CD8-positive, alpha-beta memory T cell (primary cell): ENCODE measurements at regions of chr5 and their contacts with region 1.

Region 1: DNA sequence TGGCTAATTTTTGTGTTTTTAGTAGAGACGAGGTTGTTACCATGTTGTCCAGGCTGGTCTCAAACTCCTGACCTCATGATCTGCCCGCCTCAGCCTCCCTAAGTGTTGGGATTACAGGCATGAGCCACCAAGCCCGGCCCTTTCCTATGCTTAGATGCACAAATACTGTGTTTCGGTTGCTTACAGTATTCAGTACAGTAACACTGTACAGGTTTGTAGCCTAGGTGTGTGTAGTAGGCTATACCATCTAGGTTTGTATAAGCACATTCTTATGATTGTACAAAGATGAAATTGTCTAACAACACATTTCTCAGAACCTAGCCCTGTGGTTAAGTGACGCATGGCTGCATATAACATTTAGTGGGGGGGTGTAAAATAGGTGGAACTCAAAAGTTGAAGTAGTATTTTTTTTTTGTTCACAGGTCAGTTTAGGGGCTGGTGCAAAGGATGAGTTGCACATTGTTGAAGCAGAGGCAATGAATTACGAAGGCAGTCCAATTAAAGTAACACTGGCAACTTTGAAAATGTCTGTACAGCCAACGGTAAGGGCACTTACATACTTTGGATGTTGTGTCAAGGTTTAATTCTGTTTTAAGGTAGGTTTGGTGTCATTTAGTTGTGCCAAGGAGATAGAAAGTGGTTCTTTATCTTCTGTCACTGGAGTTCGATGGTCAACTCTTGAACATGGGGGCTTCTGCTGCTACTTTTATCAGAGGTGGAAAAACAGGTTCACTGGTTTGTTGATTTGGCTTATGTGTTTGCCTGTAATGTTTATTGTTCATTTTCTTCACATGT is 3.4 kb downstream of the NPM1 start:
- DNase-seq: peak in 1 of 5 donors; percentile 15
- H3K4me3 ChIP-seq: no peak overlapping the region
- H3K4me3 Mint-ChIP-seq: peak overlapping the region; percentile 61 to 99 (median 97)
- H3K27ac ChIP-seq: no peak overlapping the region
- H3K27ac Mint-ChIP-seq: peak overlapping the region; percentile 14 to 92 (median 81)
- H3K4me1 ChIP-seq: peaks cover 53% of the 10 kb centered on the region
- H3K4me1 Mint-ChIP-seq: peaks cover 68 to 85% (median 79%) of the 10 kb centered on the region in 3 donors
- H3K27me3 ChIP-seq: no peaks in the 10 kb centered on the region
- H3K27me3 Mint-ChIP-seq: peaks cover 0 to 11% of the 10 kb centered on the region in 2 donors

Region 2: GRCh38 chr5:171931163-171931562 is 540.1 kb after region 1 on chr5:
- CTCF ChIA-PET with region 1: no interaction called
- POLR2A ChIA-PET with region 1: interaction called, 10 read pairs
- DNase-seq: no peak
- H3K4me3 ChIP-seq: no peak overlapping the region
- H3K4me3 Mint-ChIP-seq: peak overlapping the region in 1 of 7 donors; percentile 35
- H3K27ac ChIP-seq: no peak overlapping the region
- H3K27ac Mint-ChIP-seq: peak overlapping the region in 1 of 8 donors; percentile 44
- H3K4me1 ChIP-seq: peaks cover 12% of the 10 kb centered on the region
- H3K4me1 Mint-ChIP-seq: peaks cover 49 to 67% (median 66%) of the 10 kb centered on the region in 3 donors
- H3K27me3 ChIP-seq: no peaks in the 10 kb centered on the region
- H3K27me3 Mint-ChIP-seq: no peaks in the 10 kb centered on the region